PC-9 (cell line): ENCODE measurements at regions of chr6 and their contacts with region 1.

Region 1: DNA sequence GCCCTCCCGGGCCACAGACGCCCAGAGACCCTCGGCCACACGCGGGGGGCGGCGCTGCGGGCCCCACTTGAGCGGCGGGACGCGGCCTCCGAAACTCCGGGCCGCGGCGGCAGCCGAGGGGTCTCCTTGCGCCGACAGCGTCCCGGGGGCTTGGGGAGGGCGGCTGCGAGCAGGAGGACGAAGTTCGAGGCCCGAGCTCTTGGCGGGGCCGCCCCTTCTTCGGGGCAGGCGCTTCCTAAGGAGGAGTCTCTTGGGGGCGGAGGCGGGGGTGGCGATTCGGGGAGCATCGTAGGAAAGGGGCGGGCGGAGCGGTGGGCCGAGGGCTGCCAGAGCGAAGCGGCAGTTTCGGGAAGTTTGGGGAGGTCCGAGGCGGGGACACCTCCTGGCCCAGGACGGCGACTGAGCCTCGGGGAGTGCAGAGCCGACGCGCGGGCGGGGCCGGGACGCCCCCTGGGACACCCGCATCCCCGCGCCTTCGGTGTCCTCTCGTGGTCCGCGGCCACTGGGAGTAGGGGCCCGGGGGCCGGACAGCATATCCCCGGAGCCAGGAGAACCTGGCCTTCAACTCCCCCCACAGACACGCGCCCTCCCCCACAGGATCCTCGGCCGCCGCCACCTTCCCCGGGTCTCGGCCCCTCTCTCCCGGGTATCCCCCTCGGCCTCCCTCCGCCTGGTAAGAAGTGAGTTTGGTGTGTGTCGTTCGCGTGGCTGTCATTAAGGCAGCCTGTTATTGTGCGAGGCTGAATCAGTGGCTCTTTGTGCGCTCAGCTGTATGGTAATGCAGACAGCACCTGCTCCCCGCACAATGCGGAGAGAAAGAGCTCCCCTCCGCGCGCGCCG is 613 bp upstream of the DLL1 start:
- DNase-seq: no peak
- H3K4me3 ChIP-seq: no peak overlapping the region
- H3K27ac ChIP-seq: no peak overlapping the region
- H3K4me1 ChIP-seq: no peaks in the 10 kb centered on the region
- H3K27me3 ChIP-seq: peaks cover 56% of the 10 kb centered on the region
- CTCF ChIP-seq: no peak

Region 2: DNA sequence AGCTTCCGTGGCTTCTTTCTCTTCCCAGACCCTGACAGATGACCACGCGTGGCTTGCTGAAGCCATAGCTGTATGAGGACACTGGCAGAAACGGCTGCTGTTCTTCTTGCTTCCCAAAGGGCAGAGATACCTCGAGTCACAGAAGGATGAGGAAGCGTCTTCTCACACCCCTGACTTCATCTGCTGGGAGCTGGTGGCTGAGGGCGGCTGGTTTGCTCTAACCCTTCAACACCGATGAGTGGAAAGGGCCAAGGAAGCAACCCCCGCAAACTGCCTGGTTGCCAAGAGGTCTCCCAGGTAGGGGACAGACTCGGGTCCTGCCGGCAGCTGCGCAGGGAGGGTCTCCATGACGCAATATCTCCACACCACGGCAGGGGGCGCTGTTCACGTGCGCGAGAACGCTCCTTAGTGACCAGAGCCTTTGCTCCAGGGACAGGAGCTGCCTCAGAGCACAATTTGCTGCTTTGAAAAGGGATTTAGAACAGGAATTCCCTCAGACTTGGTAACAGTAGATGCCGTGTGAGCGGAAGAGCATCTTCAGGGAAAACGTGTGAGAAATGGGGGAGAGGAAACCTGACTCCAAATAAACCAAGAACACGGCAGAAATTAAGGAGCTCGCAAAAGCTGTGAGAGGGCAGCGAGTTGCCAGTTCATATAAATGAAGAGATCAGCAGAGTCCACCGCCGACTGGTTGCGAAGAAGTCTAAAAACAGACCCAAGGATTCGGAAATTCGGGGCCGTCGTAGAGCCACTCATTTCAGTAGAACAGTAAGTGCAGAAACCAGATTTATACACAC is 459.8 kb before region 1 on chr6:
- CTCF ChIA-PET with region 1: no interaction called
- POLR2A ChIA-PET with region 1: no interaction called
- intact Hi-C with region 1: loop called (anchors 5 kb)
- DNase-seq: peak in 1 of 2 experiments; percentile 37
- H3K4me3 ChIP-seq: no peak overlapping the region
- H3K27ac ChIP-seq: no peak overlapping the region
- H3K4me1 ChIP-seq: no peaks in the 10 kb centered on the region
- H3K27me3 ChIP-seq: peaks cover 93% of the 10 kb centered on the region
- CTCF ChIP-seq: peak; percentile 83

Region 3: DNA sequence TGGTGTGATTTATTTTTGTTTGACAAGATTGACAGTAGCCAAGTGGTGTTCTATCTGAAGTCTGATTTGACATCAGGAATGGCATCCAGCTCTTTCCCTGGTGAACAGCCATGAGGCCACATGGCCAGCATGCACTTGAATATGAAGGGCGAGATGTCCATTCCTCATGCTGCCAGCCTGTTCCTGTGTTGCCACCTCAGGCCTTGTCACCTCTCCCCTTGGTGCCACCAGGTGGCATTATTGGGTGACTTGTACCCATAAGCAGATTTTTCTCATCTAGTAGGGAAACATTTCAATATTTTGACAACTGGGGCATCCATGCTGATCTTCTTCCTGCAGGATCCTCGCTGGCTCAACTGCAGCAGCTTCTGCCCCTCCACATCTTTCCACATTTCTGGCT is 340.9 kb before region 1 on chr6:
- CTCF ChIA-PET with region 1: no interaction called
- POLR2A ChIA-PET with region 1: no interaction called
- intact Hi-C with region 1: loop called (anchors 2 kb)
- DNase-seq: no peak
- H3K4me3 ChIP-seq: no peak overlapping the region
- H3K27ac ChIP-seq: no peak overlapping the region
- H3K4me1 ChIP-seq: no peaks in the 10 kb centered on the region
- H3K27me3 ChIP-seq: peaks cover 16% of the 10 kb centered on the region
- CTCF ChIP-seq: peak; percentile 41; the same call in 1 of the 2 replicates

Region 4: DNA sequence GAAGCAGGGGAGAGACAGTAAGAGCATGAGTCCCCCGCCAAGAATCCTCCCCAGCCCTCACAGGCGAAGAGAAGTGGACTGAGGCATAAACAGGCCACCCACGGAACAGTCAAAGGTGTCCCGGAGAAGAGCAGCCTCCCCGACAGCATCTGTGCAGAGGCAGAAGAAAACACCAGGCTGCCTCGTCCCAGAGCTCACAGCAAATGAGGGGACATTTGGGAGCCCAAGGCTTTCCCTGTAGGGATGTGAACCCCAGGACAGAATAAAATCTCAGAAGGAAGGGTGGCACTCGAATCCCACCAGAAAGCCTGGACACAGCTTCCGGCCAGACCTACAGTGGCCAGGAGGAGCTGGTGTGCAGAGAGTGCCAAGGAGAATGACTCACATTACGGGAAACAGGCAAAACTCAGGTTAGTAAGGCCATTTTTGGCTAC is 91.0 kb before region 1 on chr6:
- CTCF ChIA-PET with region 1: no interaction called
- POLR2A ChIA-PET with region 1: interaction called, 10 read pairs
- intact Hi-C with region 1: no loop called
- DNase-seq: no peak
- H3K4me3 ChIP-seq: no peak overlapping the region
- H3K27ac ChIP-seq: no peak overlapping the region
- H3K4me1 ChIP-seq: no peaks in the 10 kb centered on the region
- H3K27me3 ChIP-seq: peaks cover 66% of the 10 kb centered on the region
- CTCF ChIP-seq: no peak